Activated CD8-positive, alpha-beta T cell treated with anti-CD3 and anti-CD28 coated beads, Interleukin-2, amount 10 ng/mL, durations not matched to agents 7 days and 5 days (primary cell): ENCODE measurements at regions of chr1 and their contacts with region 1.

Region 1: DNA sequence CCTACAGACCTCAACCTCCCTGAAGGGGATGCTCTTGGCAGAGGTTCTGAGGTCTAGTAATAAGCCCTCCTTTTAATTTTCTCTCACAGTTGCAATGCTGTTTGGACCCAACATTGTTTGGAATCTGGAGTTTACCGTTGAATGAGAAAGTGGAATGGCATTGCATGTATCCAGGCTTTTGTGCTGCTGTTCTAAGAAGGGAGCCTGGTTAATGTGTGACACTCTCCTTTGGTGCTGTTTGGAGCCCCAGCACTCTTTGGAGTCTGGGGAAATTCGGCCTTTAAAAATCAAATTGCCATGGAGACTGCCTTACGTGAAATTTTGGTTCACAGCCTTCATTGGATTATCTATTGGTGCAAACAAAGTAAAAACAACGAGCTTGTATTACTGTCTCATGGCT is 23.7 kb upstream of the TMEM61 start:
- DNase-seq: no peak
- ATAC-seq: no peak
- H3K4me3 Mint-ChIP-seq: no peak overlapping the region
- H3K27ac Mint-ChIP-seq: no peak overlapping the region
- H3K4me1 Mint-ChIP-seq: no peaks in the 10 kb centered on the region
- H3K27me3 Mint-ChIP-seq: peaks cover 25% of the 10 kb centered on the region

Region 2: GRCh38 chr1:54996359-54996868 is 39.7 kb after region 1 on chr1:
- CTCF ChIA-PET with region 1: interaction called, 78 read pairs
- POLR2A ChIA-PET with region 1: no interaction called
- DNase-seq: peak; percentile 86
- ATAC-seq: peak; percentile 82
- H3K4me3 Mint-ChIP-seq: peak overlapping the region; percentile 42
- H3K27ac Mint-ChIP-seq: peak overlapping the region; percentile 87
- H3K4me1 Mint-ChIP-seq: peaks cover 40% of the 10 kb centered on the region
- H3K27me3 Mint-ChIP-seq: peaks cover 32% of the 10 kb centered on the region

Region 3: DNA sequence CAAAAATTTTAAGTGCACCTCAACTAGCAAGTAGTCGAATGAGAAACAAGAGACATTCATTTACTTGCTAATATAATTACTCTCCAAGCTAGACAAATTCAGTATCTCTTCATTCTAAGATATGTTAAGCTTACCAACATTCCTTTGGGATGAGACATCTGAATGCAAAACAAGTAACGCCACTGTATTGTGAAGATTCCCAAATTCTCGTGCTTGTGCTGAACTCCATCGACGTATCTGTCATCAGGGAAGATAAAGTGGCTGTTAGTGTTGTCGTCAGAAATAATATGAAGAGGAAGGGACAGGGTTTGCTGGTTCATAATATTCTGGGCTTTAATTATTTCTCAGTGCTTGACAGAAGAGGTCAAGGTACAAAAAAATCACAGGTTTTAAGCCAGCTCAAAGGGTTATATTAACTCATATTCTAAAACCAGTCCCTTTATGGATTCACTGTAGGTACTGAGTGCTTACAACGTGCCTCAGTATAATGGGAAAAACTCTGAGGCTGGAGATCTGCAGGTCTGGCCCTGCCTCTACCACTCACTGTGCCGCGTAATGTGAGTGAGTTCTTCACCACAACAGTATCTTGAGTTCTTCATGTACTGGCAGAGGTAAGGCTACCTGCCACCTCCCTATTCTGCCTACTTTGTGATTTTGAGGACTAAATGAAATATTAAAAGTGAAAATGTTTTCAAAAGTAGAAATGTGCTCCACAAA is 124.6 kb after region 1 on chr1:
- CTCF ChIA-PET with region 1: no interaction called
- POLR2A ChIA-PET with region 1: no interaction called
- DNase-seq: no peak
- ATAC-seq: no peak
- H3K4me3 Mint-ChIP-seq: no peak overlapping the region
- H3K27ac Mint-ChIP-seq: no peak overlapping the region
- H3K4me1 Mint-ChIP-seq: no peaks in the 10 kb centered on the region
- H3K27me3 Mint-ChIP-seq: no peaks in the 10 kb centered on the region